ENCODE measurements at regions of chr3 and their contacts with region 1.

Region 1: GRCh38 chr3:18988614-18989229 is 159.6 kb upstream of the KCNH8 start:
- DNase-seq: no peak
- H3K4me3 Mint-ChIP-seq: peak overlapping the region; percentile 82
- H3K27ac Mint-ChIP-seq: peak overlapping the region; percentile 92
- H3K4me1 Mint-ChIP-seq: peaks cover 34% of the 10 kb centered on the region
- H3K27me3 Mint-ChIP-seq: peaks cover 3% of the 10 kb centered on the region

Region 2: DNA sequence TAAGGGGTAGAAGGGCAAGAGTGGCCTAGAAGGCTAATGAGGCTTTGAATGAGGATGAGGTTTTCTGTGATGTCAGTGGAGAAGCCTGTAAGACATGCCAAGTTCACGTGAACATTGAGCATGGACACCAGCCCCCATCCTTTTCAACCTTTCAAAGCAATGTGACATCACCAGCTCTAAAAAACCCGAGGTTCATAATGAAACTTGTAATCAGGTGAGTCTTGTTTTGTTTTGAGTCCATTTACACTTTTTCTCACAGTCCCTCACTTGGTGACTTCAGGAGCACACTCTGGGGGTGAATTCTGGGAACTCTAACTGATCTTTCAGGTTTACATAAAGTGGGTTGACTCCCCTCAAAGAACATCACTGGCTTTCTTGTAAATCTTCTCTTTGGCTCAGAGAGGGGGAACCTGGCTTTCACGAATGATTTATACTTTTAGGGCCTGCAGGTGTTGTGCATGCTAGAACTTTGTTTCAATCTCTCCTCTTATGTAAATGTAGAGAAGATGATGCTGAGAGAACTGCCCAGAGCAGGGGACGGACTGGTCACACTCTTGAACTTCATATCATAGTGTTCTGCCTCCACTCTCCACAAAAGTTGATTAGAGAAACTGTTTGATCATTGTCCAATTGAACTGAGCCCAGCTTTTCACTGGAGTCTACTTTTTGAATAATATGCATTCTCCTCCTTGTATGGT is 338.9 kb before region 1 on chr3:
- intact Hi-C with region 1: loop called (anchors 2 kb)
- DNase-seq: peak; percentile 49
- H3K4me3 Mint-ChIP-seq: peak overlapping the region; percentile 14
- H3K27ac Mint-ChIP-seq: peak overlapping the region; percentile 93
- H3K4me1 Mint-ChIP-seq: peaks cover 84% of the 10 kb centered on the region
- H3K27me3 Mint-ChIP-seq: no peaks in the 10 kb centered on the region

Region 3: DNA sequence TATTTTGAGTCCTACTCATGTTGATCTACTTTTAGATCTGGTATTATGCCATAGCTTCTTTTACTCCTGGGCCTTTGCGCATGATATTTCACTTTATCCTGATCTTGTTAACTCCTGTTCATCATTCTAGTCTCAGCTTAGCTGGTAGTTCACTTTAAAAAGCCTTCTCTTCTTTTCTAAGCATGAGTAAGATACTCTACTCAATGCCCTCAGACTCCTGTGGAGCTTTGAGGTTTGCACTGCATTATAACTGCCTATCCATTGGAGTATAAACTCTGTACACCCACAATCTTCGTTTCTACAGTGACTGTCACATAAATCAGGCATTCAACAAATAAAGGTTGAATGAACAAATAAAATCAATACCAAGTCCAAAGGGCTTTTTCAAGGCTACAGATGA is 198.3 kb before region 1 on chr3:
- intact Hi-C with region 1: loop called (anchors 2 kb)
- DNase-seq: no peak
- H3K4me3 Mint-ChIP-seq: no peak overlapping the region
- H3K27ac Mint-ChIP-seq: no peak overlapping the region
- H3K4me1 Mint-ChIP-seq: peaks cover 6% of the 10 kb centered on the region
- H3K27me3 Mint-ChIP-seq: no peaks in the 10 kb centered on the region

Region 4: GRCh38 chr3:18847583-18848197 is 141.0 kb before region 1 on chr3:
- intact Hi-C with region 1: loop called (anchors 1 kb)
- DNase-seq: no peak
- H3K4me3 Mint-ChIP-seq: no peak overlapping the region
- H3K27ac Mint-ChIP-seq: no peak overlapping the region
- H3K4me1 Mint-ChIP-seq: peaks cover 18% of the 10 kb centered on the region
- H3K27me3 Mint-ChIP-seq: no peaks in the 10 kb centered on the region

Region 5: GRCh38 chr3:18861137-18861536 is 127.6 kb before region 1 on chr3:
- intact Hi-C with region 1: no loop called
- DNase-seq: no peak
- H3K4me3 Mint-ChIP-seq: no peak overlapping the region
- H3K27ac Mint-ChIP-seq: no peak overlapping the region
- H3K4me1 Mint-ChIP-seq: no peaks in the 10 kb centered on the region
- H3K27me3 Mint-ChIP-seq: peaks cover 2% of the 10 kb centered on the region

Region 6: GRCh38 chr3:18891641-18892040 is 97.1 kb before region 1 on chr3:
- intact Hi-C with region 1: loop called (anchors 1 kb)
- DNase-seq: peak; percentile 44
- H3K4me3 Mint-ChIP-seq: no peak overlapping the region
- H3K27ac Mint-ChIP-seq: no peak overlapping the region
- H3K4me1 Mint-ChIP-seq: peaks cover 30% of the 10 kb centered on the region
- H3K27me3 Mint-ChIP-seq: peaks cover 16% of the 10 kb centered on the region

Measured in activated T-helper 2 cell treated with anti-CD3 and anti-CD28 coated beads, Interferon-gamma antibody, Interleukin-2, Interleukin-4, amounts not matched to agents 10 μg/mL and 5 μg/mL and 100 μg/mL, durations not matched to agents 14 hours and 24 hours and 36 hours (primary cell).